PC-3 (cell line): ENCODE measurements at regions of chr7 and their contacts with region 1.

Region 1: GRCh38 chr7:134140889-134141867 is 14.0 kb downstream of the LRGUK start:
- DNase-seq: peak; percentile 72
- ATAC-seq: peak; percentile 97
- H3K4me3 ChIP-seq: no peak overlapping the region
- H3K27ac ChIP-seq: no peak overlapping the region
- H3K4me1 ChIP-seq: no peaks in the 10 kb centered on the region
- H3K27me3 ChIP-seq: no peaks in the 10 kb centered on the region
- CTCF ChIP-seq: peak; percentile 90

Region 2: DNA sequence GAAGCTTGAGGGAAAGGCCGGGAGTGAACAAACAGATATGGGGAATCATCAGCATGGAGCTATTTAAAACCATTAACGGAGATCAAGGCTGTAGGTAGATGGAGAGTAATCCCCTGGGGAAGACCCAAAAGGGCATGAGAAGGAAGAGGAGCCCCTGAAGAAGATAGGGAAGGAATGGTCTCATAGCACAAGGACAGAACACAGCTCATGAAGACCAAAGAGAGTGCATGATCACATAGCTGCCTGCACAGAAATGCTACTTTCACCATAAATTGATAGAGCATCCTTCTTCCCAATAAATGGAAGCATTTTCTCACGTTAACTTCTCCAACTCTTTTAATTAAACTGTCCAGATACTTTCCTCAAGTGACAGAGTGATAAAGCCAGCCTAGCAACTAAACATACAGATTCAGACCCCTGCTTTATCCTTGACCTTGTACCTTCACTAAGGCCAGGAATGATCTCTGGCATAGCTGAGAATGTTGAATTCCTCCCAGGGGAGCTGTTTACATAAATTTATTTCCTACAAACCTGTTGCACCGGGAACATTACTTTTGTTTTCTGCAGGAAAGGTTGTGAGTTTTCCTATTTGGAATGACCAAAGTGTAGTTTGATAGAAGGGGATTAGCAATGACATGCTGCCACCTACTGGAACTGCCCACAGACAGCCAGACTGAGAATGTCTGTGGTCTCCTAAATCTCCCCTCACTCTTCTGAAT is 124.8 kb before region 1 on chr7:
- CTCF ChIA-PET with region 1: interaction called, 4 read pairs
- POLR2A ChIA-PET with region 1: no interaction called
- intact Hi-C with region 1: loop called (anchors 2 kb)
- DNase-seq: peak; percentile 49
- ATAC-seq: peak; percentile 74
- H3K4me3 ChIP-seq: no peak overlapping the region
- H3K27ac ChIP-seq: no peak overlapping the region
- H3K4me1 ChIP-seq: no peaks in the 10 kb centered on the region
- H3K27me3 ChIP-seq: no peaks in the 10 kb centered on the region
- CTCF ChIP-seq: peak; percentile 87

Region 3: DNA sequence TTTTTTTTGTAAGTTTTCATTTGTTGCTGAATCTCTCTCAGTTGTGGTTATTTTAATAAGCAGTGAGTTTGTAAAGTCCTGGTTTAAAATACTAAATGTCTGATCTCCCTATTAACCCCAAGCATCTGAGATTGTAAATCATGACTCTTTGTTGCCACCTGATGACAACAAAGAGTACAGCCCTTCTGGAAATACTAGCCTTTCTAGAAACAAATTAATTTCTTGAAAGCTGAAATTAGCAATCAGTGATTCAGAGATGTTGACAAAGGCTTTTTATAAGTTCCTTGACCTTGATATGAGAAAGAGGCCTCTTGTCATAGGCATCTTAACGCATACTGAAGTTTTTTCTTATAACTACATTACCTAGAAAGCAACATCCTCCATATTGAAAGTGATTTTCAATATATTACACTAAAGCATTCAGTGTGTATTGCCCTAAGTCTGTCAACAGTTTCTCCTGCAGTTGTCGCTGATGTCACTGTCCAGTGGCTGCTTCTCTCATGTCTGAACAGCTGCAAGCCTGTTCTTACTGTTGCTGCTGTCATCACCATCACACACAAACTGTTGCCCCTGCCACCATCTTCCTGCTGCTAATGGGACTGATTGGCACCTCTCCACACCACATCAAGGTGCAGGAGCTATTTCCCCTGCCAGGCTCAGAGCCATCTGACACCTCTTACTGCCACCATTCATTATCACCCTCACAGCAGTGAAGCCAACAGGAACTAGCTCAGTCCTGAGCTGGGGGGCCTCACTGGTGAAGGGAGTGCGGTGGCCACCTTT is 109.2 kb before region 1 on chr7:
- CTCF ChIA-PET with region 1: no interaction called
- POLR2A ChIA-PET with region 1: no interaction called
- intact Hi-C with region 1: loop called (anchors 5 kb)
- DNase-seq: peak; percentile 26
- ATAC-seq: no peak; the same call in 1 of the 2 replicates
- H3K4me3 ChIP-seq: no peak overlapping the region
- H3K27ac ChIP-seq: no peak overlapping the region
- H3K4me1 ChIP-seq: peaks cover 17% of the 10 kb centered on the region
- H3K27me3 ChIP-seq: no peaks in the 10 kb centered on the region
- CTCF ChIP-seq: peak; percentile 58

Region 4: DNA sequence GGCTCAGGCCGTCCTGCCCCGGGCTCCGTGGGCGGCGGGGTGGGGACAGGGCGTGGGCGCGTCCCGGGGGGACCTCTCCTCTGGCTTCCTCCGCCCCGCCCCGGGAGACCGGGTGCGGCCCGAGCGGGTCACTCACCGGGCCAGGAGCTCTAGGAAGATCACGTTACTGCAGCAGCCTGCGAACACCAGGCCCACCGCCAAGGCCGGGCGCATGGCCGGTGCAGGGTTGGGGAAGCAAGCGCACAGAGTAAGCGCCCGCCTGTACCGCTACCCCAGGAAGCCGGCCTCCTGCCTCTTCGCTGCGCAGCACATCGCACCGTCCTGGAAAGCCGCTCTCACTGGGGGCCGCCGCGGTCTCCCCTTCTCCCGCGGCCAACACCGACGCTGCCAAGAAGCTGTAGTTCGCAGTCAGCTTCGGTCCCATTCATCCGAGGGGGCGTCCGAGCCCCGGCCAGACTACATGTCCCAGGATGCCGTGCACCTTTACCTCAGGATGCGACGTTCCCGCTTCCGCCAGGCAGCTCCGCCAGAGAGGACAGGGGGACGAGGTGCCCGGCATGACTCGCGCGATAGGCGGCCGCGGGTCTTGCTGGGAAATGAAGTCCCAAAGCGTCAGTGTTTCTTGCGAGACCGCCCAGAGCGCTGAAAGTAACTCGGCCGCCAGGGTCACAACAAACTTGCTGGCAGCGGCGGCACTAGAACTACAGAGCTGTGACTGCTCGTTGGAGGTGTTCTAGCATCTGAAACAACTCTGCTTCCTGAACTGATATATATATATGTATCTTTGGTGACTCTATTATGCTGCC is 175.6 kb after region 1 on chr7 and contains the start of gene SLC35B4:
- CTCF ChIA-PET with region 1: no interaction called
- POLR2A ChIA-PET with region 1: no interaction called
- intact Hi-C with region 1: no loop called
- DNase-seq: peak; percentile 96
- ATAC-seq: peak; percentile 98
- H3K4me3 ChIP-seq: peak within 1 kb of the TSS; percentile 85
- H3K27ac ChIP-seq: peak within 1 kb of the TSS; percentile 35; the same call in 1 of the 2 replicates
- H3K4me1 ChIP-seq: peaks cover 13% of the 10 kb centered on the region
- H3K27me3 ChIP-seq: no peaks in the 10 kb centered on the region
- CTCF ChIP-seq: no peak
- total RNA-seq, gene SLC35B4: 34.2 and 45.0 TPM in 2 replicates

Region 5: GRCh38 chr7:134355927-134356326 is 214.7 kb after region 1 on chr7:
- CTCF ChIA-PET with region 1: interaction called, 3 read pairs
- POLR2A ChIA-PET with region 1: interaction called, 9 read pairs
- intact Hi-C with region 1: loop called (anchors 10 kb)
- DNase-seq: no peak
- ATAC-seq: no peak
- H3K4me3 ChIP-seq: no peak overlapping the region
- H3K27ac ChIP-seq: no peak overlapping the region
- H3K4me1 ChIP-seq: no peaks in the 10 kb centered on the region
- H3K27me3 ChIP-seq: no peaks in the 10 kb centered on the region
- CTCF ChIP-seq: no peak

Region 6: GRCh38 chr7:134394046-134394445 is 252.9 kb after region 1 on chr7:
- CTCF ChIA-PET with region 1: no interaction called
- POLR2A ChIA-PET with region 1: no interaction called
- intact Hi-C with region 1: no loop called
- DNase-seq: no peak
- ATAC-seq: no peak
- H3K4me3 ChIP-seq: no peak overlapping the region
- H3K27ac ChIP-seq: no peak overlapping the region
- H3K4me1 ChIP-seq: no peaks in the 10 kb centered on the region
- H3K27me3 ChIP-seq: no peaks in the 10 kb centered on the region
- CTCF ChIP-seq: no peak